ENCODE measurements at regions of chr5 and their contacts with region 1.

Region 1: DNA sequence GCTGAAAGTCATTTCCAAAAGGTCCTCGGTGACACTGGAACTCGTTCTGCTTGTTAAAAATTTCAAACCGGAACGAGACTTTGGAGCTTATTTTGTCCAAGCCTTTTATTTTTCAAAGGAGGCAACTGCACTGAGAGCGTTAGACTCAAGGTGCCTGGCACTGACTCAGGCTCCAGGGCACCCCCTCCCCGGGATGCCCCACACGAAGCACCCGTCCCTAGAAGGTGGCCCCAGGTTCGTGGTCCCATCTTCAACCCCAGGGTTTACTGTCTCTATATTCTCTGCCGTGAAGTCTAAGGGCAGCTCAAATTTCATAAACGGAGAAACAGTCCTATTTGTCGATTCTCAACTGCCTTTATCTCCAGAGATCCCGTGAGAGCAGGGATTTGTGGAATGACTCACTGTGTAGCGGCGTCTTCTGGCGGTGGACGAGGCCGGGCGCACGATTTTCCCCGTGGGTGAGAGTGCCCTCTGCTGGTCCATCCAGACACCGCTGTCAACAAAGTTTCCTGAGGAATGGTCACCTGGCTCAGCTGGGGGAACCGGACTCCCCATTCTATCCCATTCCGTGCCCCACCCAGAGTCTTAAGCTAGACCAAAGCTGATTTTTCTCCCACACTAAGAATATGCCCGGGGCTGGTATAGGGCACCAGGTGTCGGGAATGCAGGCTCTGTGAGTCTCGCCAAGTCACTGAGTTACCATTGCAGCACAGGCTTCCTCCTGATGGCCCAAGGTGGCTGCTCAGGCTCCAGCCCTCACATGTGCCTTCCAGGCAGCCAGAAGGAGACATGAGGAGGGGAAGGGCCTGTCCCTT is 27.1 kb upstream of the SLC6A19 start:
- DNase-seq: peak in 1 of 3 donors; percentile 55
- ATAC-seq: peak; percentile 50 to 79 (median 64)
- H3K4me3 ChIP-seq: no peak overlapping the region
- H3K27ac ChIP-seq: no peak overlapping the region
- H3K4me1 ChIP-seq: no peaks in the 10 kb centered on the region
- H3K27me3 ChIP-seq: no peaks in the 10 kb centered on the region
- CTCF ChIP-seq: peak; percentile 51 to 63 (median 52)
- POLR2A ChIP-seq: no peak

Region 2: GRCh38 chr5:902129-902916 is 272.0 kb before region 1 on chr5:
- intact Hi-C with region 1: no loop called
- DNase-seq: no peak
- ATAC-seq: no peak
- H3K4me3 ChIP-seq: no peak overlapping the region
- H3K27ac ChIP-seq: no peak overlapping the region
- H3K4me1 ChIP-seq: no peaks in the 10 kb centered on the region
- H3K27me3 ChIP-seq: no peaks in the 10 kb centered on the region
- CTCF ChIP-seq: no peak
- POLR2A ChIP-seq: no peak

Region 3: GRCh38 chr5:1021136-1021968 is 153.0 kb before region 1 on chr5:
- intact Hi-C with region 1: no loop called
- DNase-seq: peak in 2 of 3 donors; percentile 14 to 31
- ATAC-seq: no peak
- H3K4me3 ChIP-seq: no peak overlapping the region
- H3K27ac ChIP-seq: no peak overlapping the region
- H3K4me1 ChIP-seq: no peaks in the 10 kb centered on the region
- H3K27me3 ChIP-seq: no peaks in the 10 kb centered on the region
- CTCF ChIP-seq: no peak
- POLR2A ChIP-seq: no peak

Region 4: DNA sequence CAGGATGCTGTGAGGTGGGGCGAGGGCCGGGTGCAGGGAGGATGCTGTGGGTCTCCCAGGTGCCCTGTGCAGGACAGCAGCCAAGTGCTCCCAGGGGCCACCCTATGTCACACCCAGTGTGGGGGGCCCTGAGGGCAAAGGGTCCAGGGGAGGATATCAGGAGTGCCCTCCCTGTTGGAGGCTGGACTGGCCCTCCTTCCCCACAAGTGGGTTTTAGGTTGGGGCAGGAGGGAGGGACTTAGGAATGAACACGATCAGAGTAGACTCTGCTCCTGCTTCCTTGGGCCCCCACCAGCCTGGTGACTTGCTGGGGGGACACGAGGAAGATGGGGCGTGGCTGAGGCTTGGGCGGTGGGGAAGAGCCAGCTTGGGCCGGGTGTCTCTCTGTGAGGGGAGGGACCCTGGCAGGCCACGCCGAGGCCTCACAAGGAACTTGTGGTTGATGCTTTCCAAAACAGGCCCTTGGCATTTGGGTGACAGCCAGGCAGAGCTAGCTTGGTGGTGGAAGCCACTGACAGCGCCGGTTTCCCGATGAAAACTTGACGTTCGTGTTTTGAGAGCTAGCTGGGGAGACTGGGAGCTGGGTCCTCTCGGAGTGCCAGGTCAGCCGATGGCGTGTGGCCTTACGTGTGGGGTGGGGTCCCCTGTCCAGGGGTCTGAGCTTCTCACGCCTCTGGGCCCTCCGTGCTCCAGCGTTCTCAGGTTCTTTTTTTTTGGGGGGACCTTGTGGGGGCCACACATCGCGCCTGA is 478.4 kb after region 1 on chr5:
- intact Hi-C with region 1: loop called in 1 of 2 experiments (anchors 10 kb)
- DNase-seq: no peak
- ATAC-seq: no peak
- H3K4me3 ChIP-seq: no peak overlapping the region
- H3K27ac ChIP-seq: no peak overlapping the region
- H3K4me1 ChIP-seq: no peaks in the 10 kb centered on the region
- H3K27me3 ChIP-seq: peaks cover 0 to 8% of the 10 kb centered on the region in 2 donors
- CTCF ChIP-seq: no peak
- POLR2A ChIP-seq: no peak